Ascending aorta (tissue), 2 donors: ENCODE measurements at regions of chr4 and their contacts with region 1.

Region 1: DNA sequence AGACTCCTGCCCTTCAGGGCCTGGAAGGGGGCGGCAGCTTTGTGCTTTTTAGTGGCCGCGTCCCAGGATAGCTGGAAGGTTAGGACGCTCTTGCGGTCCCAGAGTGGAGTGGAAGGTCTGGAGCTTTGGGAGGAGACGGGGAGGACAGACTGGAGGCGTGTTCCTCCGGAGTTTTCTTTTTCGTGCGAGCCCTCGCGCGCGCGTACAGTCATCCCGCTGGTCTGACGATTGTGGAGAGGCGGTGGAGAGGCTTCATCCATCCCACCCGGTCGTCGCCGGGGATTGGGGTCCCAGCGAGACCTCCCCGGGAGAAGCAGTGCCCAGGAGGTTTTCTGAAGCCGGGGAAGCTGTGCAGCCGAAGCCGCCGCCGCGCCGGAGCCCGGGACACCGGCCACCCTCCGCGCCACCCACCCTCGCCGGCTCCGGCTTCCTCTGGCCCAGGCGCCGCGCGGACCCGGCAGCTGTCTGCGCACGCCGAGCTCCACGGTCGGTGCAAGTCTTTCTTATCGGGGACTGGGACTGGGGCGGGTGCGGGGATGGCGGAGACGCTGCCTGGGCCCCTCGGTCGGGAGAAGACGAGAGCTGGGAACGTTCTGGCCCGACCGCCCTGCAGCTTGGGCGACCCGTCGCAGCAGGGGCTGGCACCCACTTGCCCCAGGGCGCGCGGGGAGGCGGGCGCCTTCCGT is at the start of gene EDNRA:
- DNase-seq: peak in 1 of 2 donors; percentile 69
- H3K4me3 ChIP-seq: peak within 1 kb of the TSS; percentile 60 to 85
- H3K27ac ChIP-seq: peak within 1 kb of the TSS; percentile 92 to 96
- H3K4me1 ChIP-seq: peaks cover 6 to 18% of the 10 kb centered on the region in 2 donors
- H3K27me3 ChIP-seq: no peaks in the 10 kb centered on the region
- CTCF ChIP-seq: no peak
- total RNA-seq, gene EDNRA: 31.4 TPM

Region 2: GRCh38 chr4:147103403-147103946 is 377.6 kb before region 1 on chr4:
- intact Hi-C with region 1: loop called (anchors 10 kb)
- DNase-seq: peak; percentile 73 to 95
- H3K4me3 ChIP-seq: no peak overlapping the region
- H3K27ac ChIP-seq: peak overlapping the region; percentile 72 to 78
- H3K4me1 ChIP-seq: peaks cover 0 to 14% of the 10 kb centered on the region in 2 donors
- H3K27me3 ChIP-seq: no peaks in the 10 kb centered on the region
- CTCF ChIP-seq: no peak

Region 3: DNA sequence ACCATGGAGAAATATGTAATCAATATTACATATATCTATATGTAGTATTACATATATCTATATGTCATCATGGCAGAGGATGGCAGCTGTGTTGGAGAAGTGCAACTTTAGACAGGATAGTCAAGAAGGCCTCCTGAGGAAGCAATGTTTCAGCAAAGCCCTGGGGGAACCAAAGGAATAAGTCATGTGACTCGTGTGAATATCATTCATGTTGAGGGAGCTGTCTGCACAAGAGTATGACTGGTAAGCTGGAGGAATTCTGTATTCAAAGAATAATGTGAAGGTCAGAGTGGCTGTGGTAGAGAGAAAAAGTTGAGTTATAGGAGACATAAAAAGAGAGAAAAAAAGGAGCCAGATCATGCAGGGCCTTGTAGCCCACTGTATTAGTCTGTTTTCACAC is 93.0 kb before region 1 on chr4:
- intact Hi-C with region 1: no loop called
- DNase-seq: no peak
- H3K4me3 ChIP-seq: no peak overlapping the region
- H3K27ac ChIP-seq: no peak overlapping the region
- H3K4me1 ChIP-seq: no peaks in the 10 kb centered on the region
- H3K27me3 ChIP-seq: no peaks in the 10 kb centered on the region
- CTCF ChIP-seq: no peak

Region 4: DNA sequence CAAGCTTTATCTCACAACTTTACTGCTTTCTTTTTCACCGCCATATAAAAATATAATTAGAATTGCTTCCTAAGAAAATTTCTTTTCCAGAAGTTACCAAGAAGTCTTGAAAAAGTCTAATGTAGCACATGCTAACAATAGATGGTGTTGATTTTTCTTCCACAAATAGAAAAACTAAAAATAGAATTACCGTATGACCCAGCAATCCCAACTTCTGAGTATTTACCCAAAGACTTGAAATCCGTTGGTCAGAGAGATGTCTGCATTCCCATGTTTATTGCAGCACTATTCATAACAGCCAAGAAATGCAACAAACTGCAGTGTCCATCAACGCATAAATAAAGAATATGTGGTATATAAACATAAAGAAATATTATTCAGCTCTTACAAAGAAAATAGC is 18.0 kb before region 1 on chr4:
- intact Hi-C with region 1: loop called (anchors 2 kb)
- DNase-seq: no peak
- H3K4me3 ChIP-seq: no peak overlapping the region
- H3K27ac ChIP-seq: peak overlapping the region; percentile 88 to 95
- H3K4me1 ChIP-seq: peaks cover 3 to 10% of the 10 kb centered on the region in 2 donors
- H3K27me3 ChIP-seq: no peaks in the 10 kb centered on the region
- CTCF ChIP-seq: no peak

Region 5: GRCh38 chr4:147542229-147542990 is 61.4 kb after region 1 on chr4:
- intact Hi-C with region 1: loop called (anchors 2 kb)
- DNase-seq: no peak
- H3K4me3 ChIP-seq: no peak overlapping the region
- H3K27ac ChIP-seq: peak overlapping the region; percentile 14 to 17
- H3K4me1 ChIP-seq: peaks cover 0 to 7% of the 10 kb centered on the region in 2 donors
- H3K27me3 ChIP-seq: no peaks in the 10 kb centered on the region
- CTCF ChIP-seq: no peak

Region 6: GRCh38 chr4:148300877-148301276 is 819.8 kb after region 1 on chr4:
- intact Hi-C with region 1: no loop called
- DNase-seq: no peak
- H3K4me3 ChIP-seq: no peak overlapping the region
- H3K27ac ChIP-seq: no peak overlapping the region
- H3K4me1 ChIP-seq: no peaks in the 10 kb centered on the region
- H3K27me3 ChIP-seq: no peaks in the 10 kb centered on the region
- CTCF ChIP-seq: no peak